GM13977 (cell line): ENCODE measurements at regions of chr10 and their contacts with region 1.

Region 1: DNA sequence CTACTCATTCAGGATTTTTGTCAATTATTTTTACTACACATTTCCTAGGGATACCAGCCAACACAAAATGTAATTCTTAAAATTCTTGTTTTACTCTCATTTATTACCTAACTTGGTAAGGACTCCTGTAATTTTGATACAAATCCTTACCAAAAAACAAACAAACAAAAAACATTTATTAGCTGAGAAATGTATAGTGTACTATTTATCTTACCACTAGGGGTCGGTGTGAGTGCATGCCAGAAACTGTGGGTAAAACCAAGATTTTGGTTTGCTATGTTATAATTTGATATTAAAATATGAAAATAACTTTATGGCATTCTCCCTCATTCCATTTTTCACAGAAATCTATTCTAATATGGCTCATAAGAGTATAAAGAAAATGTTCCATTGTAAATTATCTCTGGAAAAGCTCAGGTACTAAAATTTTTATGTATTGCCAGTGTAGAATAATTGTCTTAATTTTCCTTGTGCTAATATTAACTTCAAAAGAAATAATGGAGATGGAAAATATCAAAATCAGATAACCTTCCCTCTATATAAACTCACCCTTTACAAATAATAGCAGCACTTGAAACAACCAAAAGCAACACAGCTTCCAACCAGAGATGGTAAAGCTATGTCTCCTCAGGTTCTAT is 290.8 kb upstream of the PCDH15 start:
- DNase-seq: peak; percentile 3
- CTCF ChIP-seq: peak; percentile 67

Region 2: GRCh38 chr10:55048830-55049498 is 42.8 kb before region 1 on chr10:
- in situ Hi-C with region 1: no loop called
- DNase-seq: no peak
- CTCF ChIP-seq: no peak

Region 3: GRCh38 chr10:55263327-55263726 is 171.5 kb after region 1 on chr10:
- in situ Hi-C with region 1: loop called (anchors 25 kb)
- DNase-seq: no peak
- CTCF ChIP-seq: no peak

Region 4: GRCh38 chr10:56928711-56929110 is 1836.9 kb after region 1 on chr10:
- in situ Hi-C with region 1: no loop called
- DNase-seq: no peak
- CTCF ChIP-seq: no peak